Caco-2 (cell line): ENCODE measurements at regions of chr2 and their contacts with region 1.

Region 1: GRCh38 chr2:220434385-220434784 is 807.0 kb downstream of the SLC4A3 start:
- DNase-seq: no peak
- H3K4me3 ChIP-seq: no peak overlapping the region
- H3K4me3 Mint-ChIP-seq: no peak overlapping the region
- H3K27ac Mint-ChIP-seq: no peak overlapping the region
- H3K4me1 ChIP-seq: no peaks in the 10 kb centered on the region
- H3K4me1 Mint-ChIP-seq: no peaks in the 10 kb centered on the region
- H3K27me3 ChIP-seq: no peaks in the 10 kb centered on the region
- H3K27me3 Mint-ChIP-seq: peaks cover 20% of the 10 kb centered on the region
- CTCF ChIP-seq: no peak

Region 2: GRCh38 chr2:220452561-220452960 is 18.2 kb after region 1 on chr2:
- CTCF ChIA-PET with region 1: no interaction called
- POLR2A ChIA-PET with region 1: interaction called, 16 read pairs
- intact Hi-C with region 1: no loop called
- DNase-seq: no peak
- H3K4me3 ChIP-seq: no peak overlapping the region
- H3K4me3 Mint-ChIP-seq: no peak overlapping the region
- H3K27ac Mint-ChIP-seq: no peak overlapping the region
- H3K4me1 ChIP-seq: no peaks in the 10 kb centered on the region
- H3K4me1 Mint-ChIP-seq: no peaks in the 10 kb centered on the region
- H3K27me3 ChIP-seq: no peaks in the 10 kb centered on the region
- H3K27me3 Mint-ChIP-seq: peaks cover 14% of the 10 kb centered on the region
- CTCF ChIP-seq: no peak